ENCODE measurements at regions of chr11 and their contacts with region 1.

Region 1: DNA sequence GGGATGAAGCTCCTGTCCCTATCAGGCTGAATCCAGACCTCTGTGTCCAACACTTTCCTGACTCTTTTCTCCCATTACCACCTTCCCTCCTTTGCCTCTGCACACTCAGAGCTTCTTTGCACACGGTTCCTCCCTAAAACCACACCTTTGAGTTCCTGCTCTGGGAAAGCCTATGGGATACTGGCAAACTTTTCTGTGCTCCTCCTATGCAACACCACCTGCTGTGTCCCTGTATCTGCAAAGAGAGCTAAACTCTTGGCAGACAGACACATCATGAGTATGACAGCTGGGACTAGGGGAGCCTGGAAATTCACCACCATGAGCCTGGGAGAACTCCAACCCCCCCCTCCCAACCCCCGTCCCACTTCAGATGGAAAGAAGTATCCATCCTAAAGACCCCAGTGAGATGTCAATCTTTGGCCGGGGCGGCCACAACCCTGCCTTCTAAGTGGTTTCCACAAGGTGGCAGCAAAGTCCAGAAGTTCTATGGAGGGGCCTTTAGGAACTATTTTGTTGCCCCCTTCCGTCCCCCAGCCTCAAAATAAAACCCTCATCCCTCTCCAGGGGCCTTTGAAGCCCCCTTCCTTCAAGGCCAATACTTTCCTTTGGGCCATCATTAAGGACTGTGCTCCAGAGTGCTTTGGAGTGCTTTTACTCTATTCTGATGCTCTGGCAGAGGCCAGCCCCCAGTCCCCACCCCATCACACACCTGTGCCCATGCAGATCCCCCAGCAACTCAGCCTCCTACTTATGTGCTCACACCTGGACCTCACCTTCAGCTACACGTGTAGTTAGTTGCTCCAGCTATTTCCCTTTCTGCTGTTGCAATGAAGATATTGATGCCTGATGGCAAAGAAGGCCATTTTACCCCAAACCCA is 19.4 kb downstream of the HTR3A start:
- DNase-seq: peak in 1 of 2 experiments; percentile 86
- H3K4me3 ChIP-seq: no peak overlapping the region
- H3K27ac ChIP-seq: no peak overlapping the region
- H3K4me1 ChIP-seq: peaks cover 3 to 10% (median 6%) of the 10 kb centered on the region in 4 experiments
- H3K27me3 ChIP-seq: no peaks in the 10 kb centered on the region
- CTCF ChIP-seq: peak; percentile 62 to 76 (median 64)
- EP300 ChIP-seq: no peak
- POLR2A ChIP-seq: no peak
- RAD21 ChIP-seq: peak; percentile 81 to 86

Region 2: DNA sequence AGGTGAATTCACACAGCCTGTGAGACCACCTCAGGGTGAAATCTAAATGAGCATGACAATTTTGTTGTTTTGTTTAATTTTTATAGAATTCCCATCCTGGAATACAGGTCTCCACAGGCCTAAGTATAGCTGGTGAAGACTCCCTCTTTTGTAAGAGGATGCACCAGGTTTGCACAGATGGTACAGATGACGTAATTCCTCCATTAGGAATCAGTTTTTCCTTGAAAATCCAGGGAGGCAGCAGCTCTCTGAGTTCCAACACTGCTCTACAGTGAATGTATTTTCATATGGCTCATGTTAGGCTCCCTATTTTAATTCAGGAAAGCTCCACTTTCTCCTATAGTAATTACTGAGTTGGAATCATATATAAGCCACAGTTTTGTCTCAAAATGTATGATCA is 166.1 kb before region 1 on chr11:
- CTCF ChIA-PET with region 1: no interaction called
- POLR2A ChIA-PET with region 1: no interaction called
- DNase-seq: no peak
- H3K4me3 ChIP-seq: no peak overlapping the region
- H3K27ac ChIP-seq: no peak overlapping the region
- H3K4me1 ChIP-seq: no peaks in the 10 kb centered on the region
- H3K27me3 ChIP-seq: no peaks in the 10 kb centered on the region
- CTCF ChIP-seq: no peak
- EP300 ChIP-seq: no peak
- POLR2A ChIP-seq: no peak
- RAD21 ChIP-seq: no peak

Region 3: GRCh38 chr11:113906038-113906437 is 88.3 kb before region 1 on chr11:
- CTCF ChIA-PET with region 1: interaction called, 29 read pairs
- POLR2A ChIA-PET with region 1: no interaction called
- DNase-seq: no peak
- H3K4me3 ChIP-seq: no peak overlapping the region
- H3K27ac ChIP-seq: no peak overlapping the region
- H3K4me1 ChIP-seq: peaks cover 0 to 9% (median 3%) of the 10 kb centered on the region in 4 experiments; a peak in 1 of 7 replicates
- H3K27me3 ChIP-seq: no peaks in the 10 kb centered on the region
- CTCF ChIP-seq: peak; percentile 40 to 60 (median 51)
- EP300 ChIP-seq: no peak
- POLR2A ChIP-seq: no peak
- RAD21 ChIP-seq: peak; percentile 44 to 62

Region 4: GRCh38 chr11:113967361-113967760 is 27.0 kb before region 1 on chr11:
- CTCF ChIA-PET with region 1: interaction called, 10 read pairs
- POLR2A ChIA-PET with region 1: no interaction called
- DNase-seq: no peak
- H3K4me3 ChIP-seq: no peak overlapping the region
- H3K27ac ChIP-seq: no peak overlapping the region
- H3K4me1 ChIP-seq: no peaks in the 10 kb centered on the region; a peak in 1 of 7 replicates
- H3K27me3 ChIP-seq: 0 out of 7 replicates have a peak, but pooled peaks cover 0 to 2% (median 0%) of the 10 kb centered on the region in 4 experiments
- CTCF ChIP-seq: no peak
- EP300 ChIP-seq: no peak
- POLR2A ChIP-seq: no peak
- RAD21 ChIP-seq: no peak

Region 5: DNA sequence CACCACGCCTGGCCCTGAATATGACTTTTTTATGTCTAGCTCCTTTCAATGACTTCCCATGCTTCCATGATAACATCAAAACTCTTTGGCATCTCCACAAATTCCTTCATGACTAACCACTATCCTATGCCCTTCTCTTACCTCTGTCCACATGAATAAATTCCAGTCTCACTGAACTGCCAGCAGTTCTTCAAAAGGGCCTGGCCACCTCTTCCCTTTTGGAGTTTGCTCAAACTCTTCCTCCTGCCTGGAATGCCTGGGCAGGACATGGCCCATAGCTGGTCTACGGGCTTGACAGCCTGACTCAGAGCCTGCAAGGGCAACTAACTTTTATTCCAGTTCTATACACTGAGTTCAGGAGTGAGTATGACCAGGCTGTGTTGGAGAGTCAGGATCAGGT is 23.4 kb after region 1 on chr11:
- CTCF ChIA-PET with region 1: interaction called, 21 read pairs
- POLR2A ChIA-PET with region 1: no interaction called
- DNase-seq: no peak
- H3K4me3 ChIP-seq: no peak overlapping the region
- H3K27ac ChIP-seq: no peak overlapping the region
- H3K4me1 ChIP-seq: no peaks in the 10 kb centered on the region
- H3K27me3 ChIP-seq: no peaks in the 10 kb centered on the region
- CTCF ChIP-seq: no peak
- EP300 ChIP-seq: no peak
- POLR2A ChIP-seq: no peak
- RAD21 ChIP-seq: no peak

Region 6: GRCh38 chr11:114036156-114036811 is 42.0 kb after region 1 on chr11:
- CTCF ChIA-PET with region 1: interaction called, 59 read pairs
- POLR2A ChIA-PET with region 1: no interaction called
- DNase-seq: peak; percentile 86 to 90
- H3K4me3 ChIP-seq: peak overlapping the region in 1 of 4 experiments; percentile 43; a peak in 2 of 8 replicates
- H3K27ac ChIP-seq: no peak overlapping the region
- H3K4me1 ChIP-seq: no peaks in the 10 kb centered on the region
- H3K27me3 ChIP-seq: peaks cover 0 to 3% (median 0%) of the 10 kb centered on the region in 4 experiments; a peak in 2 of 7 replicates
- CTCF ChIP-seq: peak; percentile 70 to 98 (median 96)
- EP300 ChIP-seq: 0 out of 3 replicates have a peak, but pooled peaks of 1 of the 2 experiments have one; percentile 56
- POLR2A ChIP-seq: no peak
- RAD21 ChIP-seq: peak; percentile 81 to 87

Region 7: GRCh38 chr11:114250993-114251814 is 256.9 kb after region 1 on chr11:
- CTCF ChIA-PET with region 1: interaction called, 33 read pairs
- POLR2A ChIA-PET with region 1: no interaction called
- DNase-seq: no peak
- H3K4me3 ChIP-seq: no peak overlapping the region
- H3K27ac ChIP-seq: no peak overlapping the region
- H3K4me1 ChIP-seq: peaks cover 0 to 5% (median 0%) of the 10 kb centered on the region in 4 experiments; a peak in 2 of 7 replicates
- H3K27me3 ChIP-seq: no peaks in the 10 kb centered on the region
- CTCF ChIP-seq: no peak
- EP300 ChIP-seq: no peak
- POLR2A ChIP-seq: no peak
- RAD21 ChIP-seq: no peak